H1 (cell line): ENCODE measurements at regions of chr20 and their contacts with region 1.

Region 1: GRCh38 chr20:37941332-37941731 is 38.4 kb downstream of the VSTM2L start:
- DNase-seq: peak in 1 of 2 experiments; percentile 57
- H3K4me3 ChIP-seq: no peak overlapping the region
- H3K27ac ChIP-seq: no peak overlapping the region
- H3K4me1 ChIP-seq: 0 out of 7 replicates have a peak, but pooled peaks cover 0 to 4% (median 0%) of the 10 kb centered on the region in 4 experiments
- H3K27me3 ChIP-seq: no peaks in the 10 kb centered on the region
- CTCF ChIP-seq: peak; percentile 67 to 87 (median 72)
- EP300 ChIP-seq: no peak
- POLR2A ChIP-seq: no peak
- RAD21 ChIP-seq: peak; percentile 28 to 43; a peak in 3 of 4 replicates

Region 2: DNA sequence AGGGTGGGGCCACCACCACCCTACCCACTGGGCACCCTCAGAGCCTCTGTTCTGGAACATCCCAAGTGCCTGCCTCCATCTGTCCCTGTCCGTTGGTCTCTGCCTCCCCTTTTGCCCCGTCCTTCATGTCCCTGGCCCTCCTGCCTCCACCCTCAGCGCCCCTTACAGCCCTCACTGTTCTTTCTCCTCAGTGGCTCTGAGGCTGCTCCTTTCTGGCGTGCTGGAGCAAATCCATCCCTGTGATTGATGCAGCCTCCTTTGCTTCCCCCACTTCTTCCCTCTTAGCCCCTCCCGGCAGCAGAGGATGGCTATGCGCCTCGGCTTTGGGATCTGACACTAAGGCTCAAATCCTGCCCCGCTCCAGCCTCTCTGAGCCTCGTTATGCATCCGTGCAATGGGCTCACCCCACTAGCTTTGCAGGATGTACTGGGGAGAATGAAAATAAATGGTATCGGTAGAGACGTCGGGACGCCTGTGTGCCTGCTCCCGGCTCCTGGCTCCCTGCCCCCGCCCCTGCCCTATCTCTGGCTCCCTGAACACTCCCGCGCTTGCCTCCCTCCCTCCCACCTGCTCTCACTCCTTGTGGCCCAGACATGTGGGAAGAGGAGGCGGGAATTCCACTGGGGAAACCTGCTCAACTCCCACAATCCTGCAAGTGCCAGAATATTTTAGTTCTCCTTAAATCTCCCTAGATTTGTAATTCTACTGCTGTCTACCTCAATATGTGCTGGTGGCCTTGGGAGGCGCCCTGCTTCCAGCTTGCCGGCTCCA is 25.3 kb before region 1 on chr20:
- CTCF ChIA-PET with region 1: interaction called, 12 read pairs
- POLR2A ChIA-PET with region 1: no interaction called
- DNase-seq: peak in 1 of 2 experiments; percentile 77
- H3K4me3 ChIP-seq: peak overlapping the region; percentile 31 to 60 (median 38); a peak in 7 of 8 replicates
- H3K27ac ChIP-seq: no peak overlapping the region
- H3K4me1 ChIP-seq: peaks cover 6 to 39% (median 21%) of the 10 kb centered on the region in 4 experiments
- H3K27me3 ChIP-seq: no peaks in the 10 kb centered on the region; a peak in 3 of 7 replicates
- CTCF ChIP-seq: peak; percentile 38 to 55 (median 52)
- EP300 ChIP-seq: no peak
- POLR2A ChIP-seq: no peak
- RAD21 ChIP-seq: peak in 1 of 2 experiments; percentile 27; a peak in 1 of 4 replicates

Region 3: DNA sequence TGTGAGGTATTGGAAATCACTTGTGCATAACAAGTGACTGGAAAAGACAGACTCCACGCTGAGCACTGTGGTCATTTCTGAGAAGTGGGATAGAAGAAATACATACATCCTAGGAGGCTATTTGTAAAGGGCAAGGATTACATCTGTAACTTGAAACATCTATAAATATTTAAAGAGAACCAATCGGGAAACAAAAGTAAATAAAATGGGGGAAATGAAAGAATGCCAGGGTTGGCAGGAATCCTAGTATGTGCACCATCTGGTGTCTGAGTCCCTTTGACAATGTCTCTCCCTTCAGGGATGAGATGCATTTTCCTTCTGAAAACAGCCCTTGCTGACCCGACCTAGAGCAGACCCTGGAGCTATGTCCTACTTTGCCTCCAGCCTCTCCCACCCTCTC is 14.8 kb after region 1 on chr20:
- CTCF ChIA-PET with region 1: interaction called, 28 read pairs
- POLR2A ChIA-PET with region 1: no interaction called
- DNase-seq: peak in 1 of 2 experiments; percentile 10
- H3K4me3 ChIP-seq: no peak overlapping the region
- H3K27ac ChIP-seq: no peak overlapping the region
- H3K4me1 ChIP-seq: no peaks in the 10 kb centered on the region
- H3K27me3 ChIP-seq: no peaks in the 10 kb centered on the region
- CTCF ChIP-seq: no peak
- EP300 ChIP-seq: no peak
- POLR2A ChIP-seq: no peak
- RAD21 ChIP-seq: no peak

Region 4: DNA sequence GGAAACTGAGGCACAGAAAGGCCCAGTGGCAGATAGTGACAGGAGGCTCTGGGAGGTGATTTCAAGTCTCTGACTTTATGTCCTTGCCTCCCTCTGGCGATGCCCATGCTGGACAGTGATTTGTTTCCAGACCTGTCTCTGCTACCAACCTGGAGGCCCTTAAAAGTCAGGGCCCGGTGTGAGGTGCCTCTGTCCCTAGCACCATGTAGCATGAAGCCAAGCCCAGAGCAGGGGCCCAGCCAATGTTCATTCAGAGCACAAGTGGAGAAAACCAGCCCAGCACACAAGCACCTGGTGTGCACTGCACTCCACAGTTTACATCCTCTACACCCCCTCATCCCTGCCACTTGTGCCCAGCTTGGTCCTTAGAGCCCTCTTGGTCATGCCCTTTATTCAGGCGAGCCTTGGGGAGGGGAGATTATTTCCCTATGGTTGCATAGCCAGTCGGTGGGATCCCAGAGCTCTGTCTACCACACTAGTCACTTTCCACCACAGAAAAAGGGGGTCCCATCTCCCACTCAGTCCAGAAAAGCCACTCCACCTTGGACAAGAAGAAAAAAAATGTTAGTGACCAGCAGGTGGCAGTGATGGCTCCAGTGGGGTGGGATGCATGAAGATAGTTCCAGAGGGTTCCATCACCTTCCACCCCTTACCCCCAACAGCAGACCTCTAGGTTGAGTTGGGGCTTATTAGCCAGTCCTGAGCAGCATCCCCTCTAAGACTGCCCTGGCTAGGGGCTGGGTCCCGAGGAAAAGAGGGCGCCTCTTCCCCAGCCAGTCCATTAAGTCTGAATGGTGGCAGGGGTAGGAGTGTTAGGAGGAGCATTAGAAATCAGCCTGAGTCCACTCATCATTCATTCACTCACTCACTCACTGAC is 288.3 kb after region 1 on chr20:
- CTCF ChIA-PET with region 1: no interaction called
- POLR2A ChIA-PET with region 1: no interaction called
- DNase-seq: peak in 1 of 2 experiments; percentile 53
- H3K4me3 ChIP-seq: no peak overlapping the region
- H3K27ac ChIP-seq: no peak overlapping the region
- H3K4me1 ChIP-seq: no peaks in the 10 kb centered on the region
- H3K27me3 ChIP-seq: no peaks in the 10 kb centered on the region
- CTCF ChIP-seq: peak; percentile 50 to 54 (median 51)
- EP300 ChIP-seq: no peak
- POLR2A ChIP-seq: no peak
- RAD21 ChIP-seq: peak; percentile 43 to 57